Endothelial cell of umbilical vein (primary cell): ENCODE measurements at regions of chr10 and their contacts with region 1.

Region 1: GRCh38 chr10:71893920-71894319 is 42.9 kb upstream of the PSAP start:
- DNase-seq: no peak
- H3K4me3 ChIP-seq: no peak overlapping the region
- H3K27ac ChIP-seq: no peak overlapping the region
- H3K4me1 ChIP-seq: peaks cover 5% of the 10 kb centered on the region
- H3K27me3 ChIP-seq: no peaks in the 10 kb centered on the region
- CTCF ChIP-seq: no peak
- POLR2A ChIP-seq: no peak

Region 2: GRCh38 chr10:71771821-71772617 is 121.9 kb before region 1 on chr10:
- CTCF ChIA-PET with region 1: interaction called, 14 read pairs
- POLR2A ChIA-PET with region 1: no interaction called
- dilution Hi-C with region 1: no loop called
- intact Hi-C with region 1: no loop called
- DNase-seq: peak; percentile 32
- H3K4me3 ChIP-seq: no peak overlapping the region
- H3K27ac ChIP-seq: no peak overlapping the region
- H3K4me1 ChIP-seq: peaks cover 36% of the 10 kb centered on the region
- H3K27me3 ChIP-seq: no peaks in the 10 kb centered on the region
- CTCF ChIP-seq: no peak
- POLR2A ChIP-seq: no peak

Region 3: GRCh38 chr10:71835671-71836595 is 58.0 kb before region 1 on chr10:
- CTCF ChIA-PET with region 1: interaction called, 152 read pairs
- POLR2A ChIA-PET with region 1: interaction called, 4 read pairs
- dilution Hi-C with region 1: no loop called
- intact Hi-C with region 1: loop called (anchors 1 kb)
- DNase-seq: peak; percentile 88
- H3K4me3 ChIP-seq: no peak overlapping the region
- H3K27ac ChIP-seq: peak overlapping the region; percentile 39
- H3K4me1 ChIP-seq: peaks cover 30% of the 10 kb centered on the region
- H3K27me3 ChIP-seq: no peaks in the 10 kb centered on the region
- CTCF ChIP-seq: no peak
- POLR2A ChIP-seq: no peak

Region 4: GRCh38 chr10:71873582-71874211 is 20.2 kb before region 1 on chr10:
- CTCF ChIA-PET with region 1: interaction called, 27 read pairs
- POLR2A ChIA-PET with region 1: no interaction called
- dilution Hi-C with region 1: no loop called
- intact Hi-C with region 1: no loop called
- DNase-seq: no peak
- H3K4me3 ChIP-seq: no peak overlapping the region
- H3K27ac ChIP-seq: no peak overlapping the region
- H3K4me1 ChIP-seq: peaks cover 4% of the 10 kb centered on the region
- H3K27me3 ChIP-seq: no peaks in the 10 kb centered on the region
- CTCF ChIP-seq: no peak
- POLR2A ChIP-seq: no peak

Region 5: GRCh38 chr10:71957546-71958275 is 63.8 kb after region 1 on chr10:
- CTCF ChIA-PET with region 1: interaction called, 23 read pairs
- POLR2A ChIA-PET with region 1: no interaction called
- dilution Hi-C with region 1: no loop called
- intact Hi-C with region 1: no loop called
- DNase-seq: no peak
- H3K4me3 ChIP-seq: no peak overlapping the region
- H3K27ac ChIP-seq: no peak overlapping the region
- H3K4me1 ChIP-seq: peaks cover 12% of the 10 kb centered on the region
- H3K27me3 ChIP-seq: peaks cover 4 to 6% of the 10 kb centered on the region in 2 experiments
- CTCF ChIP-seq: no peak
- POLR2A ChIP-seq: no peak

Region 6: GRCh38 chr10:72048450-72049124 is 154.7 kb after region 1 on chr10:
- CTCF ChIA-PET with region 1: interaction called, 199 read pairs
- POLR2A ChIA-PET with region 1: no interaction called
- dilution Hi-C with region 1: no loop called
- intact Hi-C with region 1: loop called (anchors 1 kb)
- DNase-seq: peak; percentile 94
- H3K4me3 ChIP-seq: no peak overlapping the region
- H3K27ac ChIP-seq: no peak overlapping the region
- H3K4me1 ChIP-seq: no peaks in the 10 kb centered on the region
- H3K27me3 ChIP-seq: no peaks in the 10 kb centered on the region
- CTCF ChIP-seq: peak; percentile 96 to 99
- POLR2A ChIP-seq: no peak

Region 7: DNA sequence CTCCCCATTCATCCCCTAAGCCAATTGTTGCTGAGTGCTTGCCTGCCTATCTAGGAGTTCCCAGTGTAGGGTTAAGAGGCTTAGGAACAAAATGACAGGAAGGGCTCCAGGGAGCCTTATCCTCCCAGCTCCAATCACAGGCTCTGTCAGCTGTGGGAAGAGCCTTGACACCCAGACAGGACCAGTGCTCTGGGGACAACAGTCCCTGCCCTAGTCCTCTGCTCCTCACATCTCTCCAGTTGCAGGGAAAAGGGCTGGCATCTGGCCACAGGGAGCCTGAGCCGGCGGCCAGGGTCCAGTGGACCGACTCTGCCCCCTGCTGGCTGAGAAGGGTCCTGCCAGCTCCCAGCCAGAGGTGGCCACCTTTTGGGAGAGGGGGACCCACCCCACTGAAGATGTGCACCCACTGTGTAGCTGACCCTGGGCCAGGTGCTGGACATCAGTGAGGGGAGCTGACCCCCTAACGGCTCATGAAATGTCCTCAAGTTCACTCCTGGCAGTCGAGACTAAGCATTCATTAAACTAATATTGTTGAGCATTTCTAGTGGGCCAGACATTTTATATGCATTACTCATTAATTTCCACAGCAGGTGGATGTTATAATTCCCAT is 443.2 kb after region 1 on chr10:
- CTCF ChIA-PET with region 1: interaction called, 11 read pairs
- POLR2A ChIA-PET with region 1: no interaction called
- dilution Hi-C with region 1: no loop called
- intact Hi-C with region 1: loop called (anchors 2 kb)
- DNase-seq: peak; percentile 72
- H3K4me3 ChIP-seq: no peak overlapping the region
- H3K27ac ChIP-seq: peak overlapping the region; percentile 97
- H3K4me1 ChIP-seq: peaks cover 50% of the 10 kb centered on the region
- H3K27me3 ChIP-seq: no peaks in the 10 kb centered on the region
- CTCF ChIP-seq: peak; percentile 97 to 98
- POLR2A ChIP-seq: no peak